WTC11 (cell line): ENCODE measurements at regions of chr3 and their contacts with region 1.

Region 1: GRCh38 chr3:196969660-196970546 is 1.3 kb upstream of the PIGZ start:
- DNase-seq: peak; percentile 66
- ATAC-seq: peak; percentile 60
- H3K4me3 Mint-ChIP-seq: peak overlapping the region; percentile 61
- H3K27ac Mint-ChIP-seq: no peak overlapping the region
- H3K4me1 Mint-ChIP-seq: peaks cover 10% of the 10 kb centered on the region
- H3K27me3 Mint-ChIP-seq: peaks cover 62% of the 10 kb centered on the region
- CTCF ChIP-seq: peak; percentile 84

Region 2: DNA sequence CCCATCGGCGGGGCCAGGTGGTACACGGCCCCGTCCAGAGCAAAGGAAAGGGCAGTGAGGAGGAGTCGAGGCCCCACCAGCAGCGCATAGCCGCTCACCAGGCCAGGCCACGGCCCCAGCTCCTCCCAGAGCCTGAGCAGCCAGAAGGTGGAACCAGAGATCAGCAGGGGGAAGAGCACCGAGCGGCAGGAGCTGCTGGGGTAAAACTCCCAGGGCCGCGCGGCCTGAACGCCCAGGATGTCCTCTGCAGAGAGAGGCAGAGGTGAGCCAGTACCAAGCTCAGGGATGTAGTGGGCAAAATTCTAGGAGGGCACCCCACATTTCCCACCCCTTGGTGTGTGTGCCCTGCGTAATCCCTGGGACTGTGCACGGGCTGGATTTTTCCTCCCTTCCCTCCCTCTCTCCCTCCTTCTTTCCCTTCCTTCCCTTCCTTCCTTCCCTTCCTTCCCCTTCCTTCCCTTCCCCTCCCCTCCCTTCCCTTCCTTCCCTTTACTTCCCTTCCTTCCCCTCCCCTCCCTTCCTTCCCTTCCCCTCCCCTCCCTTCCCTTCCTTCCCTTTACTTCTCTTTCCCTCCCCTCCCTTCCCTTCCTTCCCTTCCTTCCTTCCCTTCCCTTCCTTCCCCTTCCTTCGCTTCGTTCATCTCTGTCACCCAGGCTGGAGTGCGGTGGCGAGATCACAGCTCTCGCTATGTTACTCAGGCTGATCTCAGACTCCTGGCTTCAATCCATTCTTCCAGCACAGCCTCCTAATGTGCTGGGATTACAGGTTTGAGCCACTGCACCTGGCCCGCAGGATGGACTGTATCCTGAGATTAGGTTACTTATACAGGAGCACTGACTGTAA is 21.2 kb before region 1 on chr3:
- CTCF ChIA-PET with region 1: interaction called, 10 read pairs
- POLR2A ChIA-PET with region 1: no interaction called
- DNase-seq: peak; percentile 68
- ATAC-seq: peak; percentile 89
- H3K4me3 Mint-ChIP-seq: no peak overlapping the region
- H3K27ac Mint-ChIP-seq: no peak overlapping the region
- H3K4me1 Mint-ChIP-seq: peaks cover 17% of the 10 kb centered on the region
- H3K27me3 Mint-ChIP-seq: no peaks in the 10 kb centered on the region
- CTCF ChIP-seq: no peak

Region 3: DNA sequence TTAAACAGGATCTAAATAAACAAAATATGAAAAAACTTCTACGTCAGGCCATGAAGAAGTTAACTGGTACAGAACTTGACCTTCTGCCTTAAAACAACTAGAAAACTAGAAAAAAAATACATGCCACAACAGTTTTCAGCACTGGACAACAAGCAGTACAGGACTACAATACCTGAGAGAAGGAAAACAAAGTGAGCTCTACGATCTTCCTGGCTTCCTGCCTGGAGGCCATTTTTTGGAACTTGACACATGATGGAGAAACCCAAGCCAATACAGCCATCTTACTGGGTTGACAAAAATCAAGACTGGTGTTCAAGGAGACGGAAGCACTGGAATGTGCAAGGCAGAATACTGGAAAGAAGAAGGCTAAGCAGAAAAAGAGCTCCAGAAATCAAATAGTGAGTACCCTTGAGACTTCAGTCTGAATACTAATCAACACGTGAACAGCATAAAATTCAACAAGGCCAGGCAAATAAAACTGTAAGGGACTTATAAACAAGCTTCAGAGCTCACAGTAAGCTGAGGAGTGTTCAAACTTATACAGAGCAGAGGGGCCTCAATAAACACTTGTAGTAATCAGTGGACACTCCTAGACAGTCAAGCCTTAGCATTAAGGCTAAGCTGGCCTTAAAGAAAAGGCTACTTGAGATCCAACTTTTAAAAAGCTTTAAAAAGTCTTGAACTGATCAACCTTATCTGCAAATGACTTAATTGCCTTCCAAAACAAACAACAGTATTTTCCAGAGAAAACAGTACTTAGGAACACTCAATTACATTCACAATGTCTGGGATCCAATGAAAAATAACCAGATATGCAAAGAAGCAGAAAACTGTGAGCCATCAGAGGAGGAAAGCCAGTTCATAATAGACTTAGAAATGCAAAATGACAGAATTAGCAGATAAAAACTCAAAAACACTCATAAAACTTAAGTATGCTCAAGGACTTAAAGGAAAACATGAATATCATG is 265.3 kb after region 1 on chr3:
- CTCF ChIA-PET with region 1: no interaction called
- POLR2A ChIA-PET with region 1: no interaction called
- DNase-seq: no peak
- ATAC-seq: no peak
- H3K4me3 Mint-ChIP-seq: no peak overlapping the region
- H3K27ac Mint-ChIP-seq: no peak overlapping the region
- H3K4me1 Mint-ChIP-seq: peaks cover 53% of the 10 kb centered on the region
- H3K27me3 Mint-ChIP-seq: no peaks in the 10 kb centered on the region
- CTCF ChIP-seq: no peak